Caco-2 (cell line): ENCODE measurements at regions of chr15 and their contacts with region 1.

Region 1: GRCh38 chr15:74723754-74724334 is 1.5 kb downstream of the CYP1A1 start:
- DNase-seq: peak in 1 of 2 experiments; percentile 64
- H3K4me3 ChIP-seq: no peak overlapping the region; the same call in 1 of the 2 replicates
- H3K4me3 Mint-ChIP-seq: peak overlapping the region; percentile 79
- H3K27ac Mint-ChIP-seq: peak overlapping the region; percentile 58
- H3K4me1 ChIP-seq: peaks cover 27% of the 10 kb centered on the region
- H3K4me1 Mint-ChIP-seq: peaks cover 16% of the 10 kb centered on the region
- H3K27me3 ChIP-seq: no peaks in the 10 kb centered on the region
- H3K27me3 Mint-ChIP-seq: no peaks in the 10 kb centered on the region
- CTCF ChIP-seq: no peak

Region 2: DNA sequence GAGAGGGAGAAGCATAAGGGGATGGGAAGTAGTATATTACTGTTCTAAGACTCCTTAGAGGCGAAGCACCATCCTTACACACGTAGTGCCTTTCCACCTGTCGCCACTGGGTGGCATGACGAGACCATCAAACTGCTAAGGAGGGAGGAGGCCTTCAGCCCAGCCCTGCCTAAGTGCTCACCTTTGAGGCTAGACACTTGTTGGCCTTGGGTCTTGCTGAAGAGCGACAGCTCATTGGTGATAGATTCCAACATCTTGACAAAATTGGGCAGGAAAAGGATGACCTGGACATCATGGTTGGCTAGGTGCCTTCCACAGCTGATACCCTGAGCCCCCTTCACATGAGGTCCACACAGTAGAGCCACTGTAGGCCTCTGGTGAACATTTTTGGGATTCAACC is 88.6 kb before region 1 on chr15:
- CTCF ChIA-PET with region 1: interaction called, 3 read pairs
- POLR2A ChIA-PET with region 1: no interaction called
- intact Hi-C with region 1: loop called (anchors 1 kb)
- DNase-seq: peak; percentile 66 to 77
- H3K4me3 ChIP-seq: no peak overlapping the region
- H3K4me3 Mint-ChIP-seq: no peak overlapping the region
- H3K27ac Mint-ChIP-seq: peak overlapping the region; percentile 46
- H3K4me1 ChIP-seq: no peaks in the 10 kb centered on the region
- H3K4me1 Mint-ChIP-seq: peaks cover 14% of the 10 kb centered on the region
- H3K27me3 ChIP-seq: no peaks in the 10 kb centered on the region
- H3K27me3 Mint-ChIP-seq: no peaks in the 10 kb centered on the region
- CTCF ChIP-seq: peak; percentile 80 to 82

Region 3: DNA sequence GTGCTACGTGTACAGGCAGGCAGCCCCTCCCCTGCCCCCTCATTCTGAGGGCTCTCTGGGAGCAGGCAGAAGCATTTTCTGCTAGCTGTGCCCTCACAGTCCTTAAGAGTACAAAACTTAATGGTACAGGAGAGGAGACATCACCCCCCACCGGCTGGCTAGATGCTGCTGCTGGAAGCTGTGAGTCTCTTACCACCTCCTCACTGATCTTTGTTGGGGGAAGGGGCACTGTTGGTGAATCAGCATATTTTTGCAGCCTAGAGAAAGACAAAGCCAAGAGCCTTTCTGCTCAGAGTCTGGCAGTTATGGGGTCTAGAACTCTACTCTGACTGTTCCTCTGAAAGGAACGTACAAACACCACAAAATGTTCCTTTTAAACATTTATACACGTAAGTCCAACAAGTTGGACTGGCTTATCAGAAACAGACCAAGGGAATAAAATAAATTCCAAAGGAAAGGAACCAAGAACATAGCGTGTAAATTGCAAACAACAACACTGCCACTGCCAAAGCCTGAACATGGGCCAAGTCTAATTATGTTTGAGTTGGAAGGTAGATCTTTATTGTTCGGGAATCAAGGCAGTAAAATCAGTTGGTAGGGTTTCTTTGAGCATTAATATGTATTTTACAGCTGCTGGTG is 81.0 kb before region 1 on chr15:
- CTCF ChIA-PET with region 1: no interaction called
- POLR2A ChIA-PET with region 1: no interaction called
- intact Hi-C with region 1: loop called (anchors 2 kb)
- DNase-seq: peak in 1 of 2 experiments; percentile 75
- H3K4me3 ChIP-seq: no peak overlapping the region
- H3K4me3 Mint-ChIP-seq: peak overlapping the region; percentile 48
- H3K27ac Mint-ChIP-seq: peak overlapping the region; percentile 90
- H3K4me1 ChIP-seq: peaks cover 54% of the 10 kb centered on the region
- H3K4me1 Mint-ChIP-seq: peaks cover 57% of the 10 kb centered on the region
- H3K27me3 ChIP-seq: no peaks in the 10 kb centered on the region
- H3K27me3 Mint-ChIP-seq: no peaks in the 10 kb centered on the region
- CTCF ChIP-seq: no peak

Region 4: DNA sequence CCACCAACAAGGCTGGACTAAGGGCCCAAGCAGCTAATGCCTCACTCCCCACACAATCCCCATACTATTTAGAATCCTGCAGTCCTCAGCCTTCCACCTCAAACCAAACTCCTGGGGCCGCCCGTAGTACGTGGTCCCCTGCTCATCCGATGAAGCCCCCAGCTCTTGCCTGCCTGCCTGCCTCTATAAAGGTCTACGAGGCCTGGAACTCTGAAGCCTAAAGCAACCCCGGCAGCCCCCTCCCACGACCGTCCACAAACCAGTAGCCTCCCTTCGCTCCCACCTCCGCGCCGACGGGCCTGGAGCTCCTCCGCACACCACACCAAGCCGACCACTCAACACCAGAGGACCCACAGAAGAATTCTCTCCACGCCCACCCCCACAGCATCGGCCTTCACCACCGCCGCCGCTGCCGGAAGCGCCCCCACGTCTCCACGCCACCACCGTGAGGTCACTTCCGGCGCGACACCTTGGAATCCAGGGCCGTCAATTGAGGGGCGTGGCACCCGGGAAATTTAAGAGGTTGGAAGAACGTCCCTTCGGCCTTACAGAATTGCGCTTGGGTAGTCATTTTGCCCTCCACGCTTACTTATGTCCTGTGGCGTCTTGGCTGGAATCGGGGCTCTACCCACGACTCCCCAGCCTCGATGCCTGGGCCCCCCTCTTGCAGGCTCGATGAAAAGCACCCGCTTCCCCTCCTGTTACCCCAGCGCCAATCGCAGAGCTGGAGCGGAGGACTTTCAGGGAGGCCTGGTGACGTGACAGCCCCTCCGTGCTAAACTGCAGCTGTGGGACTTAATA is 28.0 kb before region 1 on chr15 and contains the start of gene EDC3:
- CTCF ChIA-PET with region 1: no interaction called
- POLR2A ChIA-PET with region 1: interaction called, 3 read pairs
- intact Hi-C with region 1: loop called (anchors 2 kb)
- DNase-seq: peak; percentile 84 to 87
- H3K4me3 ChIP-seq: peak within 1 kb of the TSS; percentile 87
- H3K4me3 Mint-ChIP-seq: peak within 1 kb of the TSS; percentile 97
- H3K27ac Mint-ChIP-seq: peak within 1 kb of the TSS; percentile 99
- H3K4me1 ChIP-seq: no peaks in the 10 kb centered on the region; the same call in 1 of the 2 replicates
- H3K4me1 Mint-ChIP-seq: peaks cover 13% of the 10 kb centered on the region
- H3K27me3 ChIP-seq: no peaks in the 10 kb centered on the region
- H3K27me3 Mint-ChIP-seq: no peaks in the 10 kb centered on the region
- CTCF ChIP-seq: no peak
- total RNA-seq, gene EDC3: 50.9 and 62.0 TPM in 2 replicates

Region 5: DNA sequence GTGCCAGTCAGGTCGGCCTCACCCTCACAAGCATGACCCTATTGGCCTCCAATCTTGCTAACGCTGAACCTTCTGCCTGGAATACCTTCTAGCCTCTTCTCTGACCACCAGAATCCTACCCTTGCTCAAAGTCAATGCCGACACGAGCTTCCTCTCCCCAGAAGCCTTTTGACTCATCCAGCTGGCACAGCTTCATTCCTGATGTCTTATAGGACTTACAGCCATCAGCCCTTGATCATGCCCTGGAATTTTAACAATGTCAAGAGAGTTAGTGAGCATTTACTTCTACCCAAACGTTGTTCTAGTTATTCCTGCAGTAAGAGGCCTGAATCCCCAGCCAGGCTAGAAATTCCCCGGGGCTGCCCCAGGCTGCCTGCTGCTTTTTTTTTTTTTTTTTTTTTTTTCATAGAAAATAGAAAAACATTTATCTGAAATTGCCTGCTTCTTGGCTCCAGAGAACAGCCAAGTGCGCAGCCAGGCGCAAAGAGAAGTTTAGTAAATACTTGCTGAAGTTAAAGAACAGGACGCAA is 28.7 kb after region 1 on chr15:
- CTCF ChIA-PET with region 1: no interaction called
- POLR2A ChIA-PET with region 1: no interaction called
- intact Hi-C with region 1: no loop called
- DNase-seq: no peak
- H3K4me3 ChIP-seq: no peak overlapping the region
- H3K4me3 Mint-ChIP-seq: no peak overlapping the region
- H3K27ac Mint-ChIP-seq: no peak overlapping the region
- H3K4me1 ChIP-seq: no peaks in the 10 kb centered on the region; the same call in 1 of the 2 replicates
- H3K4me1 Mint-ChIP-seq: no peaks in the 10 kb centered on the region
- H3K27me3 ChIP-seq: no peaks in the 10 kb centered on the region
- H3K27me3 Mint-ChIP-seq: no peaks in the 10 kb centered on the region
- CTCF ChIP-seq: no peak

Region 6: DNA sequence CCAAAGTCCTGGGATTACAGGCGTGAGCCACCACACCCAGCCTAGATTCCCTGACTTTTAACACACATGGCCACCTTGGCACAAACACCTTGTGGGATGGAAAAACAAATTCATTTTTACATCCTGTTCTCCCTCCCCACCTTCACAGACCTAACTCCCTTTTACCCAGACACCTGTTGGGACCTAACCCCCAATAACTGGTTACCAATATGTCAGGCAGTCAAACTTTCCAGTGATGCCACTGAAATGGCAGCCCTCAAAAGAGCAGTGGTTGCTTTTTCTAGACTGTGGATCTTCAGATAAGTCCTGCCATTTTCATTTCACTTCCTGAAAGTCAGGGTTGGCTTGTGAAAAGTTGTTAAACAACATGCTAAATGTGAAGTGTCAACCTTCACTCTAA is 692.7 kb after region 1 on chr15:
- CTCF ChIA-PET with region 1: no interaction called
- POLR2A ChIA-PET with region 1: no interaction called
- intact Hi-C with region 1: no loop called
- DNase-seq: no peak
- H3K4me3 ChIP-seq: no peak overlapping the region
- H3K4me3 Mint-ChIP-seq: no peak overlapping the region
- H3K27ac Mint-ChIP-seq: no peak overlapping the region
- H3K4me1 ChIP-seq: no peaks in the 10 kb centered on the region
- H3K4me1 Mint-ChIP-seq: no peaks in the 10 kb centered on the region
- H3K27me3 ChIP-seq: no peaks in the 10 kb centered on the region
- H3K27me3 Mint-ChIP-seq: no peaks in the 10 kb centered on the region
- CTCF ChIP-seq: no peak